ENCODE measurements at regions of chr12 and their contacts with region 1.

Region 1: DNA sequence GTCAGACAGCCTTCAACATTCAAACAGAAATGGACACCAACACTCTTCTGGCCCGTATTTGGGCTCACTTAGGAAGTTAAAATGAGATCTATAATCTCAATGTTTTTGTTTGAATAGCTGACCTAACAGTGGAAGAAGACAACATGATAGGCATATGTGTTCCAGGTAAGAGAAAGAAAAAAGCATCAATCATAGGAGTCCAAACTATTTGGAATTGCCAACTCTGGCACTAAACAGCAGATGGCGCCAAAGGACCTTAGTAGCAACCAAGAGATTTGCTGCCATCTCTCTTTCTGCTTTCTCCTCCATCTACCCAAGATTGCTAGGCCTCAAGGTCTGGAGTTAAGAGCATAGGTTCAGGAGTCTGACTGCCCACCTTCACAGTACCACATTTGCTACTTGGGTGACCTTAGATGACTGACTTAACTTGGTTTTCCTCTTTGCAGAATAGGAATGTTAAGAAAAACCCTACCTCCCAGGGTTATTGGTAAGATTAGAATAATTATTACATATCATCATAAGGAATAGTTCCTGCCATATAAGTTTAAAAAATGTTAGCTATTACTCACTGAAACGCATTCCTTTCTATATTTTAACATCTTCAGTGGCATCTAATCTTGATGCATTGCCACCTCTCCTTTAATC is 30.2 kb downstream of the PEX5 start:
- DNase-seq: peak; percentile 69
- ATAC-seq: peak; percentile 55 to 58

Region 2: DNA sequence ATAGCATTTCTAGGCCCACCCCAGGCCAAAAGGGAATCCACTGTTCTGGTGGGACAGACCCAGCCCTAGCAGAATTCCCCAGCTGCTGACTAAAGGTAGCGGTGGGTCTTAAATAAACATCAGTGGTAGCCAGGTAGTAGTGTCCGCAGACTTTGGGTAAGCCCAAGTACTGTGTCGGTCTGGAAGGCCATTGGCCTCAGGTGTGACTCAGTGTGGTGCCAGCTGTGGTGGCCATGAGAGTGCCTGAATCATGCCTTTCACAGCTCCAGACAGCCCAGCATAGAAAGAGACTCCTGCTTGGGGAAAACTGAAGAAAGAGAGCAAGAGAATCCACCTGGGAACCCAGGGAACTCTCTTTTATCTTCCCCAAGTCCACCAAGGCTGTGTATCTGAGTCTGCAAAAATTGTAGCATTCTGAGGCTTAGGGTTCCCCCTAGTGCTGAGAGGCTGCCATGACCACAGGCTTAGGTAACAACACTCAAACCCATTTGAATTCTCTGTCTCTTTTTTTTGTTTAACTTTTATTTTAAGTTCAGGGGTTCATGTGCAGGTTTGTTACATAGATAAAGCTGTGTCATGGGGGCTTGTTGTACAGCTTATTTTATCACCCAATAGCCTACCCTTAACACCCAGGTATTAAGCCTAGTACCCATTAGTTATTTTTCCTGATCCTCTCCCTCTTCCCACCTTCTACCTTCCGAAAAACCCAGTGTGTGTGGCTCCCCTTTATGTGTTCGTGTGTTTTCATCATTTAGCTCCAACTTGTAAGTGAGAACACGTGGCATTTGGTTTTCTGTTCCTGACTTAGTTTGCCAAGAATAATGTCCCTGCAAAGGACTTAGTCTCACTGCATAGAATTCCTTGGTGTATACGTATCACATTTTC is 240.9 kb after region 1 on chr12:
- intact Hi-C with region 1: loop called (anchors 2 to 5 kb)
- DNase-seq: no peak
- ATAC-seq: peak; percentile 63 to 80

Region 3: GRCh38 chr12:7638760-7639555 is 419.2 kb after region 1 on chr12:
- intact Hi-C with region 1: loop called (anchors 1 to 5 kb)
- DNase-seq: peak; percentile 74
- ATAC-seq: peak; percentile 96 to 98

Region 4: GRCh38 chr12:7806863-7807487 is 587.3 kb after region 1 on chr12:
- intact Hi-C with region 1: loop called in 1 of 2 experiments (anchors 10 kb)
- DNase-seq: peak; percentile 66
- ATAC-seq: peak; percentile 57 to 70